Naive thymus-derived CD8-positive, alpha-beta T cell (primary cell): ENCODE measurements at regions of chr16 and their contacts with region 1.

Region 1: DNA sequence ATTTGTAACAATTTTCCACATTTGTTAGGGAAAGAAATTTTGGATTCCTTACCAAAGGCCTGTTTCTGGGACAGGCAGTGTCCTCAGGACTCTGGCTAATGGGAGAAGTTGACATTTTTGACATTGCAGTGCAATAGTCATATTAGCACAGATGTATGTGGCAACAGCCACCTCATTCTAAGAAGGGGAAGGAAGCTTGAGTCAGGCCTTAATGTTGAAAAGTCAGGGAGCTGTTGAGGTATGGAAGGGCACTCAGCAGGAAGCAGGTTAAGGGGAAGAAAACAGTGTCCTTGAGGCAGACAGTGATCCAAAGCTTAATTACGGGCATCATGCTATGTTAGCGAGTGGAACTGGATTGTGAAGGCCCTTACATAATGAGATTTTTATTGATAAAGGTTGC is 20.9 kb downstream of the AKTIP start:
- DNase-seq: no peak
- ATAC-seq: no peak
- H3K4me3 Mint-ChIP-seq: no peak overlapping the region
- H3K27ac Mint-ChIP-seq: peak overlapping the region; percentile 36 to 91 (median 64)
- H3K4me1 Mint-ChIP-seq: peaks cover 17 to 47% (median 35%) of the 10 kb centered on the region in 4 donors
- H3K27me3 Mint-ChIP-seq: no peaks in the 10 kb centered on the region

Region 2: GRCh38 chr16:53495325-53495724 is 13.2 kb after region 1 on chr16:
- POLR2A ChIA-PET with region 1: interaction called, 23 read pairs
- DNase-seq: no peak
- ATAC-seq: peak; percentile 34 to 43
- H3K4me3 Mint-ChIP-seq: peak overlapping the region in 3 of 10 donors; percentile 10 to 52 (median 15)
- H3K27ac Mint-ChIP-seq: peak overlapping the region; percentile 4 to 82 (median 57)
- H3K4me1 Mint-ChIP-seq: peaks cover 32 to 80% (median 64%) of the 10 kb centered on the region in 4 donors
- H3K27me3 Mint-ChIP-seq: no peaks in the 10 kb centered on the region

Region 3: DNA sequence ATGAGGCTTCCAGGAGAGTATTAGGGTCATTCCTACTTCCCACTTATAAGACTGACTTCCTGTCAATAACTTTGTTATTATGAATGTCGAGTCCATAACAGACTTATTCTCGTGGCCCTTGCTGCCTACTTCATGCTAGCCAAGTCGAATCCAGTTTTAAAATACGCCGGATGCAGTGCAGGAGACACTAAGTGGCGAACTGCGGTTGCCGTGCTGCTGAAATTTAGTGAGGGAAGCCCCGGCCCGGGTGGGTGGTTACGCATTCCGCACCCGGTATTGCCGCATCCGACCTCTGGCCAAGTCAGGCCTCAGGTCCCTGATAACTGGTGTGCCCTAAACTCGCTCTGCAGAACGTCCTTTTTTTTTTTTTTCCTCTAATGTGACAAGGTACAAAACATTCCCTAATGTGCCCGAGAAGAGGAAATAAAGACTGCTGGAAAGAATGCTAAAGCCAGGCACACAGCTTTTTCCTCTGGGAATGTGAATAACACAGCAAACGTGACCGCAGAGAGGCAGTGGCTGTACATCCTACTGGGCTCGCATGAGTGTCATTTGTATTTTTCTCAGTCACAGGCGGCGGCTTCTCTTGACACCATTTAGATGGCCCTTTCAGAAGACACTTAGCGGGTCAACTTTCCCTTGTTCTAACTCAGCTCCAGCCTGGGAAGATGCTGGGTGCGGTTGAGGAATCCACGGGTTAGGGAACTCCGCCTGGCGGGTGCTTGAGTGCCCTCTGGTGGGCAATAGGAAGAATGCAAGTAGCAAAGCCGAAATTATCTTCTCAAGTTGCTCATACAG is 28.0 kb after region 1 on chr16:
- POLR2A ChIA-PET with region 1: no interaction called
- DNase-seq: peak; percentile 19 to 75 (median 50)
- ATAC-seq: peak; percentile 48 to 72
- H3K4me3 Mint-ChIP-seq: peak overlapping the region; percentile 46 to 76 (median 64)
- H3K27ac Mint-ChIP-seq: peak overlapping the region in 2 of 10 donors; percentile 25 to 83
- H3K4me1 Mint-ChIP-seq: peaks cover 5 to 29% (median 25%) of the 10 kb centered on the region in 4 donors
- H3K27me3 Mint-ChIP-seq: peaks cover 0 to 14% (median 3%) of the 10 kb centered on the region in 5 donors

Region 4: DNA sequence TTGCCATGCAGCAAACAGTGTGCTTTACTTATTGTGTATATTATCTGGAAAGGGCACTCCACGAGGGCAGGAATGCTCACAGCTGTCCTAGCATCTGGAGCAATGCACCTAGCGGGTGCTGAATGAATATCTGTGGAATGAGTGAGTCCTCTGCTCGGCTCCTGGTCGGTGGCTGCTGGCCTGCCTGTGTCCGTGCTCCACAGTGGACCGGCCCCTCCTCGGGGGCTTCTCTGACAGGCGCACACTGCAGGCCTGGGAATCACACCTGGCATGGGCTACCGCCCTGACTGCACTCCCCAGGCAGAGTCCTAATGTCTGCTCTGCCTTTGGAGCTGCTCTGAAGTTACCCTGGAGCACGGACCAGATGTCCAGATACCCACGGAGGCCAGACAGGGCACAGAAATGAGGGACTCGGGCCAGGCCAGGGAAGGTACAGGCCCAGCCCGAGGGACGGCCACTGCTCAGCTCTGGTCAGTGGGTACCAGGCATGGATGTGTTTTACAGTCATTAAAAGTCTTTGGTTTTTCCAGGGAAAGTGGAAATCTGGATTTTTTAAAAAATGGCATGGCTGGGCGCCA is 41.9 kb after region 1 on chr16:
- POLR2A ChIA-PET with region 1: no interaction called
- DNase-seq: no peak
- ATAC-seq: no peak
- H3K4me3 Mint-ChIP-seq: no peak overlapping the region
- H3K27ac Mint-ChIP-seq: peak overlapping the region in 2 of 10 donors; percentile 10 to 31
- H3K4me1 Mint-ChIP-seq: peaks cover 15 to 20% (median 19%) of the 10 kb centered on the region in 4 donors
- H3K27me3 Mint-ChIP-seq: peaks cover 4 to 32% (median 21%) of the 10 kb centered on the region in 5 donors

Region 5: DNA sequence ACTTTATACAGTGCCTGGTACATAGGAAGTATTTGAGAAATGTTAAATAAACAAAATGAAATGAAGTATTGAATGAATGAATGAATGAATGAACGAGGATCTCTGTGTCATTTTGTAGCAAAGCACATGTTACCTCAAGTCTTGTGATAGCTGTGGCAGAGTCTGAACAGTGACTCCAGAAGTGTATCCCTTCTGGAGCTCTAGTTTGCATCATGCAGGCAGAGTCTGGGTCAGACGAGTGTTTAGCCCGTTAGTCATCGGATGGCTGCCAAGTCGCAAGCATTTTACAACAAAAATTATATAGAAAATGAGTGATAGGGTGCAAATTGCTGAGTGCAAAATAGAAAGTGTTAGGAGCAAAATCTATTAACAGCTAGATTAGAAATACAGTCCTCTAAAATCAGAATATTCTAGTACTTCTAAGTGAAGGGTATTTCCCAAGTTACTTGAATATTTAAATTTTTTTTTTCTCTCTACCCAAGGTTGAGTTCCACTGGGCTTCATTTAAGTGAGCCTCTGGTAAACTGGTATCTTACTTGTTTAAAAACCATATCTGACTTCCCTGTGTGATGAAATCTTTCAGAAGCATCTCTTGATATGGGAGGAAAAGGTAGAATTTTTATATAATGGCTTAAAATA is 335.1 kb after region 1 on chr16:
- POLR2A ChIA-PET with region 1: no interaction called
- DNase-seq: no peak
- ATAC-seq: no peak
- H3K4me3 Mint-ChIP-seq: no peak overlapping the region
- H3K27ac Mint-ChIP-seq: peak overlapping the region in 2 of 10 donors; percentile 19 to 50
- H3K4me1 Mint-ChIP-seq: peaks cover 20 to 26% (median 21%) of the 10 kb centered on the region in 4 donors
- H3K27me3 Mint-ChIP-seq: no peaks in the 10 kb centered on the region